ENCODE measurements at regions of chr9 and their contacts with region 1.

Region 1: DNA sequence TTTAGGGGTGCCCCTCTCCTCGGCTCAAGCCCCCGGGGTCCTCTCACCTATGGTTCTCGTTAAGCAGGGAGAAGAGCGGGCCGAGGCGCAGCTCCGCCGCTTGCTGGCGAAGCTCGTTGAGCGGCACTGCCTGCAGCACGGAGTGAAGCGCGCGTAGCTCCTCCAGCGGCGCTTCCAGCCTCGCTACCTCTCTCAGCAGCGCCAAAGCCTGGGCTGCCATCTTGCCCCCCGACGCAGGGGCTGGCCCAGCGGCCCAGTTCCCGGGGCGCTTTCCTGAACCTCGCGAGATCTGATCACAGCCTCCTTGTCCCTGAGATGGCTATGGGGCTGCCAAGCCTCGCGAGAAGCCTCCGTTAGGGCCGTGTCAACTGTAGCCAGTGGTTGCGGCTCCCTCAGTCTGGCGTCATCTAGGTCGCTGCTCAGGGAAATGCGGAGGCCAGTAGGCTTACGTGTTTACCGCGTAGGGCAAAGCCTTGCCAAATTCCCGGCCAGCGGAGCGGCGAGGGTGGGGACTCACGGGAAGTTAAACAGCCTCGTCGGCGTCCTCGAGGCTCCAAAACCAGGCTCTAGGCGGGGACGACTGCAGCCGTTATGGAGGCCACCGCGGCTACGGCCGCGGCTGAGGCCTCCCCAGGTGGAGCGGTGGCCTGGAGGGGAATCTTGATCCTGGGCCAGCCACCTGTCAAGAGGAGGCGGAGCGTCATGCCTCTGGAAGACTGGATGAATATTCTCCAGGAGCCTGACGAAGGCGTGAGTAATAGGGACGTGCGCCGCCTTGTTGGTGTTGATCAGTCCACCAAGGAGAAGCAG is at the start of gene PSMD5:
- DNase-seq: peak; percentile 99
- H3K4me3 ChIP-seq: peak within 1 kb of the TSS; percentile 53 to 80 (median 76)
- H3K27ac ChIP-seq: peak within 1 kb of the TSS; percentile 72
- H3K4me1 ChIP-seq: peaks cover 25% of the 10 kb centered on the region
- H3K27me3 ChIP-seq: no peaks in the 10 kb centered on the region
- CTCF ChIP-seq: no peak
- POLR2A ChIP-seq: peak; percentile 92
- total RNA-seq, gene PSMD5: 62.2 and 70.2 TPM in 2 replicates

Region 2: DNA sequence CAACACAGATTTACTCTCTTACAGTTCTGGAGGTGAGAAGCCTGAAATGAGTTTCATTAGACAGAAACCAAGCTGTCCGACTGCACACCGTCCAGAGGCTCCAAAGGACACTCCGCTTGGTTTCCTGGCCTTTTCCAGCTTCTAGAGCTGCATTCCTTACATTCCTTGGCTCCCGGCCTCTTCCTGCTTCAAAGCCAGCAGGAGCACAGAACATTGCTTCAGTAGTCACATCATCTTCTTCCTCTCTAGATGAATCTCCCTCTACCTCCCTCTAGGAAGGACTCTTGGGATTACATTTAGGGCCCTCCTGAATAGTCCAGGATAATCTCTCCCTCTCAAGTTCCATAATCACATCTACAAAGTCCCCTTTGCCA is 476.3 kb before region 1 on chr9:
- CTCF ChIA-PET with region 1: no interaction called
- POLR2A ChIA-PET with region 1: no interaction called
- dilution Hi-C with region 1: no loop called
- intact Hi-C with region 1: no loop called
- DNase-seq: peak; percentile 83
- H3K4me3 ChIP-seq: no peak overlapping the region
- H3K27ac ChIP-seq: peak overlapping the region; percentile 78
- H3K4me1 ChIP-seq: peaks cover 12% of the 10 kb centered on the region
- H3K27me3 ChIP-seq: peaks cover 0 to 3% of the 10 kb centered on the region in 2 experiments
- CTCF ChIP-seq: peak; percentile 46 to 60
- POLR2A ChIP-seq: peak; percentile 32

Region 3: GRCh38 chr9:120619751-120620655 is 222.9 kb before region 1 on chr9:
- CTCF ChIA-PET with region 1: no interaction called
- POLR2A ChIA-PET with region 1: no interaction called
- dilution Hi-C with region 1: no loop called
- intact Hi-C with region 1: loop called (anchors 5 kb)
- DNase-seq: peak; percentile 81
- H3K4me3 ChIP-seq: no peak overlapping the region
- H3K27ac ChIP-seq: no peak overlapping the region
- H3K4me1 ChIP-seq: no peaks in the 10 kb centered on the region
- H3K27me3 ChIP-seq: no peaks in the 10 kb centered on the region
- CTCF ChIP-seq: peak; percentile 67 to 68
- POLR2A ChIP-seq: no peak

Region 4: GRCh38 chr9:120630333-120630732 is 212.6 kb before region 1 on chr9:
- CTCF ChIA-PET with region 1: no interaction called
- POLR2A ChIA-PET with region 1: no interaction called
- dilution Hi-C with region 1: no loop called
- intact Hi-C with region 1: no loop called
- DNase-seq: no peak
- H3K4me3 ChIP-seq: no peak overlapping the region
- H3K27ac ChIP-seq: no peak overlapping the region
- H3K4me1 ChIP-seq: no peaks in the 10 kb centered on the region
- H3K27me3 ChIP-seq: no peaks in the 10 kb centered on the region
- CTCF ChIP-seq: no peak
- POLR2A ChIP-seq: no peak

Region 5: DNA sequence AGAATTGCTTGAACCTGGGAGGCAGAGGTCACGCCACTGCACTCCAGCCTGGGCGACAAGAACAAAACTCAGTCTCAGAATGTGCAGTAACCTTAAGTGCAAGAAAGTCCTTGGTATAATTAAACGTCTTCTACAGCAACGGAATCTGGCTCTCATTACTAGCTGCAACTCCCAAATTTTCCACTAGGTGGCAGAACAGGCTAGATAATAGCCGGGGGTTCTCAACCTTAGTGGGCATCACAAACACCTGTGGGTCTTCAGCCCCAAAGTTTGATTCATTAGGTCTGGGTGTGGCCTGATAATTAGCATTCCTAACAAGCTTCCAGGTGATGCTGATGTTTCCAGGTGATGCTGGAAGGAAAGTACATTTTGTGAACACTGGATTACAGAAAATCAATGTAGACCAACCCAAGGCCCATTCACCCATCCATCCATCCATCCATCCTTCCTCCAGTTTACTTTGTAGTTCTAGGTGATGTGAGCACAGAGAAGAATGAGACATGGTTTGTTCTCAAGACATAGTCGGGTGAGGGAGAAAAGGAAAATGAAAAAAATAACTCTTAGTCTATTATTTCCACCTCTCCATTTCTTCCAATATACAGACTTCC is 87.0 kb before region 1 on chr9:
- CTCF ChIA-PET with region 1: no interaction called
- POLR2A ChIA-PET with region 1: no interaction called
- dilution Hi-C with region 1: no loop called
- intact Hi-C with region 1: loop called (anchors 2 kb)
- DNase-seq: peak; percentile 65
- H3K4me3 ChIP-seq: no peak overlapping the region
- H3K27ac ChIP-seq: no peak overlapping the region
- H3K4me1 ChIP-seq: no peaks in the 10 kb centered on the region
- H3K27me3 ChIP-seq: no peaks in the 10 kb centered on the region
- CTCF ChIP-seq: peak; percentile 70 to 74
- POLR2A ChIP-seq: no peak

Region 6: GRCh38 chr9:120792898-120793765 is 49.8 kb before region 1 on chr9 and contains the start of gene FBXW2:
- CTCF ChIA-PET with region 1: no interaction called
- POLR2A ChIA-PET with region 1: interaction called, 8 read pairs
- dilution Hi-C with region 1: no loop called
- intact Hi-C with region 1: loop called (anchors 1 kb)
- DNase-seq: peak; percentile 92
- H3K4me3 ChIP-seq: peak within 1 kb of the TSS; percentile 78 to 83 (median 82)
- H3K27ac ChIP-seq: peak within 1 kb of the TSS; percentile 64
- H3K4me1 ChIP-seq: peaks cover 27% of the 10 kb centered on the region
- H3K27me3 ChIP-seq: no peaks in the 10 kb centered on the region
- CTCF ChIP-seq: no peak
- POLR2A ChIP-seq: peak; percentile 95
- total RNA-seq, gene FBXW2: 70.2 and 72.3 TPM in 2 replicates

Region 7: GRCh38 chr9:120856700-120857099 is 13.8 kb after region 1 on chr9:
- CTCF ChIA-PET with region 1: interaction called, 22 read pairs
- POLR2A ChIA-PET with region 1: interaction called, 3 read pairs
- dilution Hi-C with region 1: no loop called
- intact Hi-C with region 1: no loop called
- DNase-seq: no peak
- H3K4me3 ChIP-seq: no peak overlapping the region
- H3K27ac ChIP-seq: no peak overlapping the region
- H3K4me1 ChIP-seq: no peaks in the 10 kb centered on the region
- H3K27me3 ChIP-seq: no peaks in the 10 kb centered on the region
- CTCF ChIP-seq: no peak
- POLR2A ChIP-seq: no peak

Region 8: DNA sequence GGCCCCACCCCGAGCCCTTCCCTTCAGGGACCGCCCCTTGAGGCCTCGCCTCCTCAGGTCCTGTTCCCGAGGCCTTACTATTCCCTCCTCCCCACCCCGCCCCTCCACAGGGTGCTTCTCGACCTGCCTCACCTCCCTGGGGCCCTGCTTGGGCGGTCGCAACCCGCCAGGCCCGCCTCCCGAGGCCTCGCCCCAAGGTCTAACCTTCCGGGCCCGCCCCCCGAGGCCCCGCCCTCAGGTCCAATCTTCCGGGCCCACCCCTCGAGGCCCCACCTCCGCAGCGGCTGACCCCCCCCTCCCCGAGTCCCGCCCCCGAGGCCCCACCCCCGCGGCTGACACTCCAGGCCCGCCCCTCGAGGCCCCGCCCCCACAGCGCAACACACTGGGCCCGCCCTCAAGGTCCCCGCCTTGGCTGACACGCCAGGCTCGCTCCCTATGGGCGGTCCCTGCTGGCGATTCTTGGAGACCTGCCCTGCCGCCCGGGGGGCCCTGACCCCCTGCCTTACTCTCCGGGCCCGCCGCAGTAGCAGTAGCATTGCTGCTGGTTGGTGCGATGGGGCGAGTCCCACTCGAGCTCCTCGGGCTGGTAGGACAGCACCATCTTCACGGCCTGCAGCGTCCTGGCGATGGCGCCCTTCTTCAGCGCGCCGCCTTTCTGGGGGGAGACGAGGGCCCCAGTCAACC is 25.9 kb after region 1 on chr9:
- CTCF ChIA-PET with region 1: interaction called, 3 read pairs
- POLR2A ChIA-PET with region 1: no interaction called
- dilution Hi-C with region 1: no loop called
- intact Hi-C with region 1: loop called (anchors 1 kb)
- DNase-seq: peak; percentile 86
- H3K4me3 ChIP-seq: peak overlapping the region in 2 of 3 experiments; percentile 19 to 58
- H3K27ac ChIP-seq: no peak overlapping the region
- H3K4me1 ChIP-seq: peaks cover 13% of the 10 kb centered on the region
- H3K27me3 ChIP-seq: no peaks in the 10 kb centered on the region
- CTCF ChIP-seq: peak; percentile 27 to 41
- POLR2A ChIP-seq: no peak

Region 9: DNA sequence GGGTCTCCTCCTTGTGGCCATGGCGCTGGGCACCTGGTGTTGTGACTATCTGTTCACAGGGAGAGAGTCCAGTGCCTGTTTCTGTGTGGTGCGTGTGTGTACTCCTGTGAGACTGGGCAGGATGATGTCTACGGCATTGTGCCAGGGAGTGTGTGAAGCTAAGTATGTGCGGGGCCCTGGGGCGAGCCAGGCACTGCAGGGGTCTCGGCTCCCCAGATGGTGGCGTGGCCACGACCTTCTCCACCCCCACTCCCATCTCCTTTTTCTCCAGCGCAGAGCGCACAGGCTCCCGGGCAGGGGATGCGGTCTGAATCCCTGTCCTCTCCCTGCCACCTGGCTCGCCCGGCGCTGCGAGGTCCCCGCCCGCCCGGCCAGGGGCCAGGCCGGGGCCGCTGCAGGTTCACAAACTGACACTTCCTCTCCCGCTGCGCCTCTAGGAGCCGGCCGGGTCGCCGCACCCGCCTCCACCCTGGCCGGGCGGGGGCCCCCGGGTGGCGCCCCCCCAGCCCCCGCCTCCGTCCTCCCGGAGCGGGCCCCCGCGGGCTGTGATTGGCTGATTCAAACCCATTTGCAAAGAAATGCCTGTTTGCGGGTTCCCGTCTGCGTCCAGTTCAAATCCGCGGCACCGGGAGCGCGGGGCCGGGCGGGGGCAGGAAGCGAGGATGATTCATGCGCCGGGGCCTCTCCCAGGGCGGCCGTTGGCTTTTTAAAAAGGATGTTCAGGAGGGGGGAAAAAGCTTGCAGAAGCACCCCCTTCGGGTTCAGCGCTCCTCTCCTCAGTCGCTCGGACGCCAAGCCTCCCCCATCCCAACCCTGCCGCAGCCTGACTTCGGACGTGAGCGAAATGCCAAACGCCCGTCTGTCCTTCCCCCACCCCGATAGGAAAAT is 33.3 kb after region 1 on chr9:
- CTCF ChIA-PET with region 1: interaction called, 4 read pairs
- POLR2A ChIA-PET with region 1: no interaction called
- dilution Hi-C with region 1: no loop called
- intact Hi-C with region 1: loop called (anchors 2 kb)
- DNase-seq: peak; percentile 90
- H3K4me3 ChIP-seq: peak overlapping the region; percentile 66 to 86 (median 70)
- H3K27ac ChIP-seq: peak overlapping the region; percentile 74
- H3K4me1 ChIP-seq: peaks cover 26% of the 10 kb centered on the region
- H3K27me3 ChIP-seq: no peaks in the 10 kb centered on the region
- CTCF ChIP-seq: peak in 1 of 2 donors; percentile 11
- POLR2A ChIP-seq: no peak

Region 10: GRCh38 chr9:120923620-120924328 is 80.9 kb after region 1 on chr9:
- CTCF ChIA-PET with region 1: no interaction called
- POLR2A ChIA-PET with region 1: no interaction called
- dilution Hi-C with region 1: no loop called
- intact Hi-C with region 1: no loop called
- DNase-seq: no peak
- H3K4me3 ChIP-seq: no peak overlapping the region
- H3K27ac ChIP-seq: no peak overlapping the region
- H3K4me1 ChIP-seq: peaks cover 16% of the 10 kb centered on the region
- H3K27me3 ChIP-seq: no peaks in the 10 kb centered on the region
- CTCF ChIP-seq: no peak
- POLR2A ChIP-seq: no peak

Region 11: DNA sequence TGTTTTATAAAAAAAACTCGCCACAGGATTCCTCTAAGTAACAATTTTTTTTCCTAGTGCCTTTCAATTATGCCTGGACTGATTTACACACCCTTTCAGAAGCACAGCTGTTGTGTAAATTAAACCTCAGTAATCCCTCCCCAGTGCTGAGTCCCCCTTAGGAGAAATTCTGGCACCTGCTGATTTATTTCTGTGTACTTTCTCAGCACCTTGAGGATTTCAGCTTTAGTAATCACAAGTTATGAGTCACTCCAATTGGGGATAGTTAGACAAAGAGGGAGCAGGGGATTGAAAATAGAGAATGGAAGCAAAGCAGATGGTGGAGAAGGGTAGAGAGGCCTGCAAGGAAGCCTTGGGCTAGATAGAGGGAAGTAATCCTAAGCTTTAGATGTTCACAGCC is 1078.5 kb after region 1 on chr9:
- CTCF ChIA-PET with region 1: no interaction called
- POLR2A ChIA-PET with region 1: no interaction called
- dilution Hi-C with region 1: no loop called
- intact Hi-C with region 1: no loop called
- DNase-seq: no peak
- H3K4me3 ChIP-seq: no peak overlapping the region
- H3K27ac ChIP-seq: no peak overlapping the region
- H3K4me1 ChIP-seq: peaks cover 3% of the 10 kb centered on the region
- H3K27me3 ChIP-seq: no peaks in the 10 kb centered on the region
- CTCF ChIP-seq: no peak
- POLR2A ChIP-seq: no peak